CD4-positive, alpha-beta T cell (primary cell): ENCODE measurements at regions of chr10 and their contacts with region 1.

Region 1: GRCh38 chr10:91797874-91798648 is at the start of gene TNKS2:
- DNase-seq: peak; percentile 83 to 96 (median 91)
- ATAC-seq: peak; percentile 73
- H3K4me3 ChIP-seq: peak within 1 kb of the TSS; percentile 93
- H3K4me3 Mint-ChIP-seq: peak within 1 kb of the TSS; percentile 98
- H3K27ac ChIP-seq: peak within 1 kb of the TSS; percentile 72 to 90
- H3K27ac Mint-ChIP-seq: peak within 1 kb of the TSS; percentile 97
- H3K4me1 ChIP-seq: peaks cover 20% of the 10 kb centered on the region
- H3K4me1 Mint-ChIP-seq: peaks cover 69% of the 10 kb centered on the region
- H3K27me3 ChIP-seq: no peaks in the 10 kb centered on the region
- H3K27me3 Mint-ChIP-seq: no peaks in the 10 kb centered on the region
- CTCF ChIP-seq: no peak
- total RNA-seq, gene TNKS2: 47.8 to 50.4 TPM

Region 2: DNA sequence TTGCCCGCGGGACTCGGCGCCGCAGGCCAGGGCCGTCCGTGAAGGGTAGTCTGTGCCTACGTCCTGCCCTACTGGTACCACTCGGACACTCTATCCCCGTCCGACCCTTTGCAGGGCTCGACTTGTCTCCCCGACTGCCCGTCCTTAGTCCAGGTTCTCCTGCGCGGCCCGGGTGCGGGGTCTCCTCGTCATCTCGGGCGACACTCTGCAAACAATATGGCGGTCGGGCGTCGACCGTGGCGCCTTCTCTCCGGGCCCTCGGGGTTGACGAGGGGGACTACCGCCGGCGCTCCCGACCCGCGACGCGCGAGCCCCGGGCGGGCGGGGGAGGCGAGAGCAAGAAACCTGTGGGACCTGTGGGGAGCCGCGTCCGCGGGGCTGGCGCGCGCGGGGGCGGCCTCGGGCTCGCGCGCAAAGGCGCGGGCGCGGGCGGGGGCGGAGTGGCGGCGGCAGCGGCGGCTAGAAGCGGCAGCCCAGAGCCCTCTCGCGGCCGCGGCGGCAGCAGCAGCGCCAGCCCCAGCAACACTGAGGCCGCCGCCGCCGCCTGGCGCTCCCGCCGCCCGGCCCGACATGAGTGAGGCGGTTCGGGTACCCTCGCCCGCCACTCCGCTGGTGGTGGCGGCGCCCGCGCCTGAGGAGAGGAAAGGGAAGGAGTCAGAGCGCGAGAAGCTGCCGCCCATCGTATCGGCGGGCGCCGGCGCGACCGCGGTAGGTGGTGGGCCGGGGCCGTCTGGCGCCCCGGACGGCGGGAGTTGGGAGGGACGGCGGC is 388.0 kb before region 1 on chr10 and contains the start of gene HECTD2:
- CTCF ChIA-PET with region 1: interaction called, 3 read pairs
- POLR2A ChIA-PET with region 1: interaction called, 9 read pairs
- intact Hi-C with region 1: loop called in 1 of 2 experiments (anchors 5 kb)
- DNase-seq: peak; percentile 61 to 94 (median 82)
- ATAC-seq: peak; percentile 85
- H3K4me3 ChIP-seq: peak within 1 kb of the TSS; percentile 92
- H3K4me3 Mint-ChIP-seq: peak within 1 kb of the TSS; percentile 92
- H3K27ac ChIP-seq: peak within 1 kb of the TSS; percentile 82 to 86
- H3K27ac Mint-ChIP-seq: peak within 1 kb of the TSS; percentile 86
- H3K4me1 ChIP-seq: peaks cover 14% of the 10 kb centered on the region
- H3K4me1 Mint-ChIP-seq: peaks cover 11% of the 10 kb centered on the region
- H3K27me3 ChIP-seq: peaks cover 3 to 8% of the 10 kb centered on the region in 2 experiments
- H3K27me3 Mint-ChIP-seq: no peaks in the 10 kb centered on the region
- CTCF ChIP-seq: peak; percentile 19
- total RNA-seq, gene HECTD2: 0.92 to 1.0 TPM

Region 3: GRCh38 chr10:91923371-91924211 is 125.5 kb after region 1 on chr10 and contains the start of gene BTAF1:
- CTCF ChIA-PET with region 1: no interaction called
- POLR2A ChIA-PET with region 1: interaction called, 77 read pairs
- intact Hi-C with region 1: loop called (anchors 5 kb)
- DNase-seq: peak; percentile 84 to 98 (median 90)
- ATAC-seq: peak; percentile 93
- H3K4me3 ChIP-seq: peak within 1 kb of the TSS; percentile 86
- H3K4me3 Mint-ChIP-seq: peak within 1 kb of the TSS; percentile 98
- H3K27ac ChIP-seq: peak within 1 kb of the TSS; percentile 93 to 97
- H3K27ac Mint-ChIP-seq: peak within 1 kb of the TSS; percentile 98
- H3K4me1 ChIP-seq: peaks cover 20% of the 10 kb centered on the region
- H3K4me1 Mint-ChIP-seq: peaks cover 47% of the 10 kb centered on the region
- H3K27me3 ChIP-seq: peaks cover 4 to 6% of the 10 kb centered on the region in 2 experiments
- H3K27me3 Mint-ChIP-seq: peaks cover under 1% of the 10 kb centered on the region
- CTCF ChIP-seq: no peak
- total RNA-seq, gene BTAF1: 80.8 to 85.8 TPM

Region 4: GRCh38 chr10:92573798-92574547 is 775.9 kb after region 1 on chr10 and contains the start of gene IDE:
- CTCF ChIA-PET with region 1: no interaction called
- POLR2A ChIA-PET with region 1: interaction called, 3 read pairs
- intact Hi-C with region 1: loop called in 1 of 2 experiments (anchors 10 kb)
- DNase-seq: peak; percentile 64 to 91 (median 76)
- ATAC-seq: peak; percentile 73
- H3K4me3 ChIP-seq: peak within 1 kb of the TSS; percentile 96
- H3K4me3 Mint-ChIP-seq: peak within 1 kb of the TSS; percentile 93
- H3K27ac ChIP-seq: peak within 1 kb of the TSS; percentile 77
- H3K27ac Mint-ChIP-seq: peak within 1 kb of the TSS; percentile 88
- H3K4me1 ChIP-seq: peaks cover 19% of the 10 kb centered on the region
- H3K4me1 Mint-ChIP-seq: peaks cover 40% of the 10 kb centered on the region
- H3K27me3 ChIP-seq: no peaks in the 10 kb centered on the region
- H3K27me3 Mint-ChIP-seq: no peaks in the 10 kb centered on the region
- CTCF ChIP-seq: peak; percentile 91
- total RNA-seq, gene IDE: 15.2 to 17.8 TPM